ENCODE measurements at regions of chr12 and their contacts with region 1.

Region 1: GRCh38 chr12:2853626-2854025 is 3.2 kb downstream of the TEX52 start:
- DNase-seq: peak; percentile 69
- H3K4me3 Mint-ChIP-seq: no peak overlapping the region
- H3K27ac Mint-ChIP-seq: no peak overlapping the region
- H3K4me1 Mint-ChIP-seq: no peaks in the 10 kb centered on the region
- H3K27me3 Mint-ChIP-seq: no peaks in the 10 kb centered on the region
- CTCF ChIP-seq: peak; percentile 70

Region 2: DNA sequence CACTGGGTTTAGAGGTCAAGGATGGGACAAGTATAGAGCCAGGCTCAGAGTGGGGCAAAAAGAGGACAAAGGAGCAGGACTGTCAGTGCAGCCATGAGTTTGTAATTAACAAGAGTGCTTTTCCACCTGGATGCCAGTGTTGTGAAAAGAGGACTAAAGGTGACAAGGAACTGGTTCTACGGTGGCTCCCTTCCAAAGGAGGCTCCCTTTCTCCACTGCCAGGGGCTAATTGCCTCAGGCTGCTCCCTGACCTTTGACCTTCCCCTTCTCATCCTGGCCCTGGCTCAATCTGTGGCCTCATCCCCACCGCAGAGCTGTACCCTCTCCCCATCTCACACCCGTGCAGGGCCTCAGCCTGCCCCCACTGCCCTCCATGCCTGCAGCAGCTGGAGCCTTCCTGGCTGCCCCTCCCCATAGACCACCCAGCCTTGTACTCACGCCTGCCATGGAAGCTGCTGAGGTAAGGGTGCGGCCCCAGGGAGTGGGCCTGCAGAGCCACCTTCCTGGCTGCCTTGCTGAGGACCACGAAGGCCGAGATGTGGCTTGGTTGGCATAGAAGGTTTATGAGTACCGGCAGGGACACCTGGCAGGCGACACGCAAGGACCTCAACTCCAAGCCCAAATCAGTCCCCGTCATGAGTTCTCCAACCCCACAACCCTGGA is 83.6 kb before region 1 on chr12:
- CTCF ChIA-PET with region 1: no interaction called
- POLR2A ChIA-PET with region 1: no interaction called
- intact Hi-C with region 1: no loop called
- DNase-seq: no peak
- H3K4me3 Mint-ChIP-seq: no peak overlapping the region
- H3K27ac Mint-ChIP-seq: no peak overlapping the region
- H3K4me1 Mint-ChIP-seq: no peaks in the 10 kb centered on the region
- H3K27me3 Mint-ChIP-seq: peaks cover 74% of the 10 kb centered on the region
- CTCF ChIP-seq: no peak

Region 3: DNA sequence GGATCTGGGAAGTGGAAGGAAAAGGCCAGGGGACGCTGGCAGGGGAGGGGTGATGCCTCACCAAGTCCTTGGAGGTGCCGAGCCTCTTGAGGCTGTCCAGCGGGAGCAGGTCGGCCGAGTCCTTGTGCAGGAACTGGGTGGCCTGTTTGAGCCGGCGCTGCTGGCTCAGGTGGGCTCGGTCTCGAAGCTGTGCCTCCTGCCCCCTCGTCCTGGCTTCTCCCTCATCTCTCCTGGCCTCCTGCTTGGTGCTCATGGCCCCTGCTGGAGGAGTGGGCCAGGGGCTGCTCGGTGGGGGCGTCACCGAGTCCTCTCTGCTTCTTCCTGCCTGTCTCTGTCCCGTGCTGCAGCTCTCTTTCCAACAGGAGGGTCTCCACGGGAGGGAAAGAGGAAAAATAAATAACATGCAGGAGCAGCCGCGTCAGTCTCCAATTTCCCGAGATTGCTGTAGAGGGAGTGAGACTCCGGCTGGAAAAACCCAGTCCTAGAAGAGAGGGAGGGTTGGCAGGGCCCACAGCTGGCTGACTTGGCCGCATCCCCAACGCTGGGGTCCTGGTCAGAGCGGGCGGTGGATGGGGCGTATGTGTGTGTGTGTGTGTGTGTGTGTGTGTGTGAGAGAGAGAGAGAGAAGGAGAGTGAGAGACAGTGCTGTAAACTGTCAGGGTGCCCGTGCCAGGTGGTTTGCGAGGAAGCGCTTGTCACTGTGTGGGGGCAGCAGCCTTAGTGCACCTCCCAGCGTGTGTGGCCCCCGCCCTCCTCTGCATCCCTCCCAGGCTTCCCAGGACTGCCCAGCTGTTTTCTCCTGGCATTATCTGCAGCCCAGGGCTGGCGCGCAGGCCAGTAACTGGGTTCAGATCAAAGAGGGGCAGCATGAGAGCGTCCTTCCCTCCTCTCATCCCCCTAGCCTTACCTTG is 18.8 kb before region 1 on chr12 and contains the start of gene NRIP2:
- CTCF ChIA-PET with region 1: interaction called, 15 read pairs
- POLR2A ChIA-PET with region 1: interaction called, 3 read pairs
- intact Hi-C with region 1: no loop called
- DNase-seq: no peak
- H3K4me3 Mint-ChIP-seq: no peak within 1 kb of the TSS
- H3K27ac Mint-ChIP-seq: no peak within 1 kb of the TSS
- H3K4me1 Mint-ChIP-seq: no peaks in the 10 kb centered on the region
- H3K27me3 Mint-ChIP-seq: no peaks in the 10 kb centered on the region
- CTCF ChIP-seq: no peak
- total RNA-seq, gene NRIP2: not detected in 2 replicates

Region 4: DNA sequence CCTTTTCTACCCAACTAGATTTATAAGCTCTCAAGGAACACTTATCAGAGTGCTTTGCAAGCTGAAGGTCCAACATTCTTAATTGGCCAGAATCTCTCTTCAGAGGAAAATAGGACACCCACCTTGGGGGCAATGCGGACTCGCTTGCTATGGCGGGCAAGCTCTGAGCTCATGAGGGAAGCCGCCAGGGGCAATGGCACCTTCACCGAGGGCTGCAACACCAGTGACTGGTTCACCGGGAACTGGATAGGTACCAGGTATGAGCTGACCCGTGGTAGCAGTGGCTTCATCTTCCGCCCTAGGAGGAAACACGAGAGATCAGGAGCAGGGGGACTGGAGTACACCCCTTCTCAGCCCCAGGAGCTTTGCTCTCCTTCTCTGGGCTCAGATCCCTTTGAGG is 10.6 kb after region 1 on chr12:
- CTCF ChIA-PET with region 1: interaction called, 12 read pairs
- POLR2A ChIA-PET with region 1: interaction called, 4 read pairs
- intact Hi-C with region 1: no loop called
- DNase-seq: no peak
- H3K4me3 Mint-ChIP-seq: no peak overlapping the region
- H3K27ac Mint-ChIP-seq: no peak overlapping the region
- H3K4me1 Mint-ChIP-seq: no peaks in the 10 kb centered on the region
- H3K27me3 Mint-ChIP-seq: no peaks in the 10 kb centered on the region
- CTCF ChIP-seq: no peak

Region 5: GRCh38 chr12:3034067-3034750 is 180.6 kb after region 1 on chr12:
- CTCF ChIA-PET with region 1: interaction called, 3 read pairs
- POLR2A ChIA-PET with region 1: no interaction called
- intact Hi-C with region 1: loop called (anchors 10 kb)
- DNase-seq: peak; percentile 59
- H3K4me3 Mint-ChIP-seq: no peak overlapping the region
- H3K27ac Mint-ChIP-seq: no peak overlapping the region
- H3K4me1 Mint-ChIP-seq: no peaks in the 10 kb centered on the region
- H3K27me3 Mint-ChIP-seq: no peaks in the 10 kb centered on the region
- CTCF ChIP-seq: peak; percentile 37

Measured in MCF 10A (cell line).